CD4-positive, alpha-beta memory T cell (primary cell): ENCODE measurements at regions of chr5 and their contacts with region 1.

Region 1: GRCh38 chr5:151164686-151165392 is 7.3 kb upstream of the ANXA6 start:
- DNase-seq: peak; percentile 78 to 84 (median 81)
- H3K4me3 ChIP-seq: no peak overlapping the region
- H3K4me3 Mint-ChIP-seq: peak overlapping the region in 1 of 8 donors; percentile 4
- H3K27ac ChIP-seq: no peak overlapping the region
- H3K27ac Mint-ChIP-seq: peak overlapping the region in 5 of 7 donors; percentile 10 to 75 (median 52)
- H3K4me1 ChIP-seq: no peaks in the 10 kb centered on the region
- H3K4me1 Mint-ChIP-seq: peaks cover 14 to 22% (median 19%) of the 10 kb centered on the region in 4 donors
- H3K27me3 ChIP-seq: no peaks in the 10 kb centered on the region
- H3K27me3 Mint-ChIP-seq: no peaks in the 10 kb centered on the region

Region 2: GRCh38 chr5:151051066-151051930 is 113.5 kb before region 1 on chr5:
- CTCF ChIA-PET with region 1: interaction called, 98 read pairs
- POLR2A ChIA-PET with region 1: no interaction called
- intact Hi-C with region 1: loop called (anchors 1 kb)
- DNase-seq: peak; percentile 53 to 70 (median 59)
- H3K4me3 ChIP-seq: no peak overlapping the region
- H3K4me3 Mint-ChIP-seq: no peak overlapping the region
- H3K27ac ChIP-seq: no peak overlapping the region
- H3K27ac Mint-ChIP-seq: peak overlapping the region; percentile 24 to 85 (median 62)
- H3K4me1 ChIP-seq: no peaks in the 10 kb centered on the region
- H3K4me1 Mint-ChIP-seq: peaks cover 5 to 17% (median 6%) of the 10 kb centered on the region in 4 donors
- H3K27me3 ChIP-seq: no peaks in the 10 kb centered on the region
- H3K27me3 Mint-ChIP-seq: no peaks in the 10 kb centered on the region

Region 3: DNA sequence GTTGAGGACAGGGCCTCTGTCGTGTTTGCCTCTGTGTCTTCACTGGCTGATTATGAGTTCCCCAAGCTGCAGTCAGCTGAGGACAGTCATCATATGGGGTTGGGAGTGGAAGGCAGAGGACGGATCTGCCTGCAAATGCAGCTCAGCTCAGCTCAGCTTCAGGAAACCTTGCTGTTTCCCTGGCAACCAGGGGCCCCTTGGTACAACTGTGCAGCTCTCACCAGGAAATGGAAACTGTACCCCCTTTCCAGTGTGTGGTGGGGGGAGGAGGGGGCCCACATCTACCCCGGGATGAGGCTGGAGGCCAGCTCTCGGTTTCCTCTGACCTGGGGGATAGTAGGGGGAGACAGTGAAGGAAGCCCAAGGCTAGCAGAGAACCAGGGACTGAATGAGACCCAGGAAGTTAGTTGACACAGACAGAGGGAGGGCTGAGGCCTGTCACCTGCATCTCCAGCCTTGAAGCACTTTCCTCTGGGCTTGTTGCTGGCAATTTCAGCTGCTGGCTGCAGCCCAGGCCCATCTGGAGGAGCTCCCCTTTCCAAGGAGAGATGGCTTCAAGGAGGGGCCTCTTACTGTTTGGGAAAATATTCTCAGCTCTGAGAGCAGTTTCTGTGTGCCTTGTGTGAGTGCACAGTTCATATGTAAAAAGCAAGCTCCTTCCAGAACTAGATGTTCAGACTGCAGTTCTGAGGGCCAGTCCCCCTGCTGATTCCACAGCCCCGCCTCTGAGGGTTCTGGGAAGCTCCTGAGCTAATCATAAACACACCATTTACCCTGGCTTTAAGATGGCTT is 14.2 kb before region 1 on chr5:
- CTCF ChIA-PET with region 1: interaction called, 2,066 read pairs
- POLR2A ChIA-PET with region 1: interaction called, 11 read pairs
- intact Hi-C with region 1: loop called (anchors 1 kb)
- DNase-seq: peak; percentile 81 to 94 (median 83)
- H3K4me3 ChIP-seq: peak overlapping the region; percentile 1 to 38
- H3K4me3 Mint-ChIP-seq: peak overlapping the region; percentile 60 to 98 (median 86)
- H3K27ac ChIP-seq: peak overlapping the region; percentile 84
- H3K27ac Mint-ChIP-seq: peak overlapping the region; percentile 94 to 99 (median 96)
- H3K4me1 ChIP-seq: peaks cover 100% of the 10 kb centered on the region
- H3K4me1 Mint-ChIP-seq: peaks cover 78 to 100% (median 90%) of the 10 kb centered on the region in 4 donors
- H3K27me3 ChIP-seq: no peaks in the 10 kb centered on the region
- H3K27me3 Mint-ChIP-seq: no peaks in the 10 kb centered on the region

Region 4: DNA sequence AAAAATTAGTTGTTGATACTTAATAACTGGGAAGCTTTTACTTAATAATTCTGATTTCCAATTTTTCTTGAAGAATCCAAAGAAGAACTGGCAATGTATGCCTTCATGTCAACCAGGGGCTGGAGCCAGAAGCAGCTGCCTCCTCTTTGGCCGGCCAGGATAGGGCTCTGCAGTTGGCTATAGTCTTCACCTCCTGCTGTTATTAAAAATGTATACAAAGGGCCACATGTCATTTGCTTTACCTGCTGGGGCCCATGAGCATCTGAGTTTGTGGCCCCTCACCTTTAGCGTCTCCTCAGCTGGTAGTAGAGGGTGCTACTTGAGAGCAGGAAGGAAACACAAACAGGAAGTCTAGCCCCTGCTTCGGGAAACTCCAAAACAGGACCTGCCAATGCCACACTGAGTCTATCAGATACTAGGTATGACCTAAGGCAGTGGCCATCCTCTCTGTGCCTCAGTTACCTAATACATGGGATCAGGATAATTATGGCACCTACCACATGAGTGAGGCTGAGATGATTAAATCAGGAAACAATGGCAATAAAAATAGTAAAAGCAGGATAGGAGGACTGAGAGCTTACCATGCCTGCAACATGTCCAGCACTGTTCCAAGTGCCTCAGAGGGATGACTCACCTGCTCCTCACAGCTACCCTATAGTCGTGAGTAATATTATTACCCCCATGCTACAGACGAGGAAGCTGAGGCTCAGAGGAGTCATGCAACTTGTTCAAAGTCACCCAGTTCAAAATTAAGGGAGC is 37.7 kb after region 1 on chr5:
- CTCF ChIA-PET with region 1: interaction called, 12 read pairs
- POLR2A ChIA-PET with region 1: no interaction called
- intact Hi-C with region 1: no loop called
- DNase-seq: peak in 1 of 5 donors; percentile 74
- H3K4me3 ChIP-seq: no peak overlapping the region
- H3K4me3 Mint-ChIP-seq: peak overlapping the region in 7 of 8 donors; percentile 28 to 76 (median 55)
- H3K27ac ChIP-seq: peak overlapping the region; percentile 25
- H3K27ac Mint-ChIP-seq: peak overlapping the region; percentile 85 to 93 (median 90)
- H3K4me1 ChIP-seq: peaks cover 32% of the 10 kb centered on the region
- H3K4me1 Mint-ChIP-seq: peaks cover 25 to 46% (median 33%) of the 10 kb centered on the region in 4 donors
- H3K27me3 ChIP-seq: no peaks in the 10 kb centered on the region
- H3K27me3 Mint-ChIP-seq: no peaks in the 10 kb centered on the region

Region 5: GRCh38 chr5:151270599-151270998 is 105.8 kb after region 1 on chr5:
- CTCF ChIA-PET with region 1: no interaction called
- POLR2A ChIA-PET with region 1: no interaction called
- intact Hi-C with region 1: no loop called
- DNase-seq: no peak
- H3K4me3 ChIP-seq: no peak overlapping the region
- H3K4me3 Mint-ChIP-seq: no peak overlapping the region
- H3K27ac ChIP-seq: no peak overlapping the region
- H3K27ac Mint-ChIP-seq: no peak overlapping the region
- H3K4me1 ChIP-seq: no peaks in the 10 kb centered on the region
- H3K4me1 Mint-ChIP-seq: no peaks in the 10 kb centered on the region
- H3K27me3 ChIP-seq: no peaks in the 10 kb centered on the region
- H3K27me3 Mint-ChIP-seq: no peaks in the 10 kb centered on the region